ENCODE measurements at regions of chr12 and their contacts with region 1.

Region 1: DNA sequence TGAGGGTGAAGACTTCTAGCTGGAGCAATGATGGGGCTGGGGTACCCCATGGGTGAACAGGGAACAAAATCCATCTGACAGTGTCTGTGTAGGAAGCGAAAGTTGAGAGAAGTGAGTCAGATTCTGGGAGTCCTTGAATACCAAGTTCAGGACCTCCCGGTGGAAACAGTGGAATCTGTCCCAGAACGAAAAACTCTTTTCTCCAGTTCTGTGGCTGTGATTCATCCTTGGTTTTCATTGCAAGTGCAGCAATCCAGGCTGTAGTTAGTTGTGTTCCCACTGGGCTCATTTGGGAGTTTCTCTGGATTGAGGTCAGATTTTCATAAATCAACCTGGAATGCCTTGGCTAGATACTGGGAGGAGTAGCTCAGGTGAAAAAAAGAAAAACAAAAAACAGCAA is 120.7 kb downstream of the C12orf75 start:
- DNase-seq: no peak
- H3K4me3 ChIP-seq: no peak overlapping the region
- H3K27ac ChIP-seq: no peak overlapping the region
- H3K27me3 ChIP-seq: no peaks in the 10 kb centered on the region
- CTCF ChIP-seq: no peak

Region 2: DNA sequence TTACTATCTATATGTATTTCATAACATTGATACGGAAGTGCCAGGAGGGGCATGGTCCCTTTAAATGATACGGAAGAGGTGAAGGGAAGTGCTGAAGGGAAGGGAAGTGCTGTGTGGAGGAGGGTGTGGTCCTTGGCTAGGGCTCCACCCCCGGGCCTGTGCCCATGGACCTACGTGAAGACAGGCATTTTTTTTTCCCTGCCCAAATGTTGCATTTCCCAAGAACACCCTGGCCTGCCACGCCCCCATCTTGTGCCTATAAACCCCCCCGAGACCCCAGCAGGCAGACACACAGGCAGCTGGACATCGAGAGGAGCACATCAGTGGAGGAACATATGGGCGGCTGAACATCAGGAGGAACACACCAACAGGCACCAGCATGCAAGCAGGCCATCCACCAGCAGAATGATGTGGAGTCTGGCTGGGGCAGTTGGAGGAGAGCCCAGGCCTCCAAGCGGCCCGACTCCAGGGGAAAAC is 627.2 kb before region 1 on chr12:
- intact Hi-C with region 1: no loop called
- DNase-seq: peak in 1 of 10 donors; percentile 3
- H3K4me3 ChIP-seq: no peak overlapping the region
- H3K27ac ChIP-seq: no peak overlapping the region
- H3K27me3 ChIP-seq: no peaks in the 10 kb centered on the region
- CTCF ChIP-seq: no peak

Region 3: DNA sequence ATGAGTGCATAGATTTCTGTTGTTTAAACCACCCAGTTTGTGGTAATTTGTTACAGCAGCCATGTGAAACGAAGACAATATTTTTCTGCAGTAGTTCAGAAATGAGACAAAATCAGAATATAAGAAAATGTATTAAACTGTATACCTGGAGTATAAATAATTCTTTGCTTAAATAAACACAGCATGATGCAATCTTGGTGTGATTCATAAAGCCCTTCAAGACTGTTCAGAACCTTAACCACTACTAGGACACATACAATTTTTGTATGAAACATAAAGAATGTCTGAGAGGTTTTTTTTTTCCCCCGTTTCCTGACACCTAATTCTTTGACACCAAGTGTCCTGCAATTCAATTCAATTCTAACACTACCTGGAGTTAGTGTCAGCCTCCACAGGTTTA is 110.2 kb before region 1 on chr12:
- intact Hi-C with region 1: loop called in 1 of 2 experiments (anchors 5 kb)
- DNase-seq: no peak
- H3K4me3 ChIP-seq: no peak overlapping the region
- H3K27ac ChIP-seq: no peak overlapping the region
- H3K27me3 ChIP-seq: no peaks in the 10 kb centered on the region
- CTCF ChIP-seq: no peak

Region 4: GRCh38 chr12:105409801-105410471 is 41.3 kb before region 1 on chr12:
- intact Hi-C with region 1: no loop called
- DNase-seq: no peak
- H3K4me3 ChIP-seq: peak overlapping the region in 3 of 59 donors; percentile 10 to 35 (median 17)
- H3K27ac ChIP-seq: no peak overlapping the region
- H3K27me3 ChIP-seq: peaks cover 0 to 6% (median 0%) of the 10 kb centered on the region in 45 donors
- CTCF ChIP-seq: no peak

Region 5: DNA sequence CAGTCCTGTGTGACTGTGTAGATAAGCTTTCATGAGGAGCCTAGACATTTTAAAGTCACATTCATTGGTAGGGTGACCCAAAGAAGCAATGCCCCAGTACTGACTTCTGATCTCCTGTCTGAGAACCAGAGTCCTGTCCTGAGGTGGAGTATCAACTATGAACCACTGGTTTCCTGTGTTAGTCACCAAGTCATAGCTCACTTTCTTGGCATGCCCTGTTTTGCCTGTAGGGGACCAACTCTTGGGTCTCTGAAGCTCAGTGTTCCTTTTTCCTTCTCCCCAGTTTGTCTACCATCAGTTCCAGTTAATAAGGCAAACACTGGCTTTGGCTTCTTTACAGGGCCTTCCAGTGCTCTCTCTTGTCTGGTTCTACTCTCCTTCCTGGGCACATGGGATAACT is 23.3 kb before region 1 on chr12:
- intact Hi-C with region 1: no loop called
- DNase-seq: no peak
- H3K4me3 ChIP-seq: no peak overlapping the region
- H3K27ac ChIP-seq: no peak overlapping the region
- H3K27me3 ChIP-seq: peaks cover 0 to 11% (median 0%) of the 10 kb centered on the region in 45 donors
- CTCF ChIP-seq: no peak

Region 6: GRCh38 chr12:105967038-105967776 is 516.0 kb after region 1 on chr12:
- intact Hi-C with region 1: no loop called
- DNase-seq: no peak
- H3K4me3 ChIP-seq: no peak overlapping the region
- H3K27ac ChIP-seq: peak overlapping the region in 5 of 59 donors; percentile 7 to 52 (median 13)
- H3K27me3 ChIP-seq: no peaks in the 10 kb centered on the region
- CTCF ChIP-seq: no peak

Measured in dorsolateral prefrontal cortex (tissue), 120 donors.